CD14-positive monocyte (primary cell): ENCODE measurements at regions of chr1 and their contacts with region 1.

Region 1: DNA sequence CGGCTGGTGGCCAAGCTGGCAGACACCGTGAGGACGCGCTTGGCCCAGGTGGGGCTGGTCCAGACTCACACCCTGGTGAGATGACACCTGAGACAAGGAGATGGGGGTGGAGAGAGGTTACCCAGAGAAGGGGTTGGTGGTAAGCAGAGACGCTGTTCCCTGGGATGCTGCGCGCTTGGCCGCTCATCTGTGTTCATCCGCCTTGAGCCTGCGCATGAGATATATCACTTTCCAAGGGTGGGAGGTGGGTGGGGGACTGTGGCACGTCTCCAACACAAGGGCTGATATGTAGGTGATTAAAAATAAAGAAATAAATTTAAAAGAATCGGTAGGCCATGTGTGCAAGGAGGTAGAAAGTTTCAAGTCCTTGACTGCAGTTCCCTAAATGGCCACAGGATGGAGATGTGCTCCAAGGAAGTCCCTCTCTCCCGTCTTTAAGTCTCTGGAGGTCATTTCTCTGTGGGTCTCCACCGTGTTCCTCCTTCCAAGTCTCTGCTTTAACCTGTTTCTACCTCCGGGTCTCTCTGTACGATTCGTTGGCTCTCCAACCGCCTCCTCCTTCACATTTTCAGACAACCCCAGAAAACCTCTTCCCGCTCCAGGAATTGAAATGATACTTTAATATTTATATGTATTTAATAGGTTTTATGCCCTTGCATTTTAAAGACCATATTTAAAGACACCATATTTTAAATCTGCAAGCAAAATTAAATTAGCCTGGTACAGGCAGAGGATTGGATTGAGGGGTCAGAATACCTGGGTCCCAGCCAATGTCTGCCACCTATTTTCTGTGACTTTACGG is 4.5 kb downstream of the TTC24 start:
- DNase-seq: peak; percentile 67 to 79 (median 78)
- H3K4me3 ChIP-seq: no peak overlapping the region
- H3K4me3 Mint-ChIP-seq: no peak overlapping the region
- H3K27ac ChIP-seq: no peak overlapping the region
- H3K27ac Mint-ChIP-seq: no peak overlapping the region
- H3K4me1 ChIP-seq: peaks cover 16 to 20% of the 10 kb centered on the region in 2 donors
- H3K4me1 Mint-ChIP-seq: peaks cover 28% of the 10 kb centered on the region
- H3K27me3 ChIP-seq: no peaks in the 10 kb centered on the region
- H3K27me3 Mint-ChIP-seq: peaks cover 0 to 3% (median 2%) of the 10 kb centered on the region in 3 donors
- CTCF ChIP-seq: peak; percentile 96

Region 2: DNA sequence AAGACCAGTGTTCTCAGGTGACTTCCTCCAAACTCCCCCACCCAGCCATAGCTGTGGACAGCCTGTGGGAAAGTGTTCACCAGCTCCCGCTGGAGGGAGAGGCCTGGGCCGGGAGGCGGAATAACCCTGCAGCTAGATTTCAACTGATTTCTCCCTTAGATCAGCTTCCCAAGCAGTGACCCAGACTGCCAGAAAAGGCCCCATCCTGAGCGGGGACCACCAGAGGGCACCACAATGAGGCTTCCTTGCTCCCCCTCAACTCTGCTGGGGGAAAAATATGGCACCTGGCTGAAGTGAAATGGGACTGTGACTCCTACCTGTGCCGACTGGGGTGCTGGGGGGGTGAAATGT is 164.2 kb before region 1 on chr1:
- intact Hi-C with region 1: no loop called
- DNase-seq: peak in 1 of 3 donors; percentile 13
- H3K4me3 ChIP-seq: peak overlapping the region in 2 of 3 experiments; percentile 31 to 73
- H3K4me3 Mint-ChIP-seq: peak overlapping the region; percentile 79 to 95
- H3K27ac ChIP-seq: no peak overlapping the region
- H3K27ac Mint-ChIP-seq: no peak overlapping the region
- H3K4me1 ChIP-seq: peaks cover 24 to 26% of the 10 kb centered on the region in 2 donors
- H3K4me1 Mint-ChIP-seq: peaks cover 27% of the 10 kb centered on the region
- H3K27me3 ChIP-seq: peaks cover 76 to 100% of the 10 kb centered on the region in 2 donors
- H3K27me3 Mint-ChIP-seq: peaks cover 94 to 96% (median 96%) of the 10 kb centered on the region in 3 donors
- CTCF ChIP-seq: no peak

Region 3: GRCh38 chr1:156540791-156541383 is 43.1 kb before region 1 on chr1:
- intact Hi-C with region 1: loop called in 1 of 2 experiments (anchors 5 kb)
- DNase-seq: peak in 2 of 3 donors; percentile 20 to 51
- H3K4me3 ChIP-seq: no peak overlapping the region
- H3K4me3 Mint-ChIP-seq: no peak overlapping the region
- H3K27ac ChIP-seq: peak overlapping the region in 1 of 2 donors; percentile 15
- H3K27ac Mint-ChIP-seq: peak overlapping the region in 3 of 7 donors; percentile 25 to 41 (median 38)
- H3K4me1 ChIP-seq: no peaks in the 10 kb centered on the region
- H3K4me1 Mint-ChIP-seq: peaks cover 17% of the 10 kb centered on the region
- H3K27me3 ChIP-seq: no peaks in the 10 kb centered on the region
- H3K27me3 Mint-ChIP-seq: peaks cover 0 to 4% (median 0%) of the 10 kb centered on the region in 3 donors
- CTCF ChIP-seq: no peak